ENCODE measurements at regions of chr2 and their contacts with region 1.

Region 1: GRCh38 chr2:222311978-222312738 is 13.4 kb upstream of the PAX3 start:
- DNase-seq: no peak
- H3K4me3 ChIP-seq: no peak overlapping the region
- H3K4me3 Mint-ChIP-seq: peak overlapping the region in 6 of 8 donors; percentile 24 to 51 (median 42)
- H3K27ac ChIP-seq: no peak overlapping the region
- H3K27ac Mint-ChIP-seq: peak overlapping the region in 6 of 7 donors; percentile 8 to 69 (median 56)
- H3K4me1 ChIP-seq: peaks cover 17% of the 10 kb centered on the region
- H3K4me1 Mint-ChIP-seq: peaks cover 4 to 10% (median 7%) of the 10 kb centered on the region in 4 donors
- H3K27me3 ChIP-seq: peaks cover 68% of the 10 kb centered on the region
- H3K27me3 Mint-ChIP-seq: peaks cover 67 to 75% of the 10 kb centered on the region in 2 donors

Region 2: GRCh38 chr2:222214885-222215284 is 97.3 kb before region 1 on chr2:
- CTCF ChIA-PET with region 1: no interaction called
- POLR2A ChIA-PET with region 1: no interaction called
- intact Hi-C with region 1: no loop called
- DNase-seq: no peak
- H3K4me3 ChIP-seq: no peak overlapping the region
- H3K4me3 Mint-ChIP-seq: no peak overlapping the region
- H3K27ac ChIP-seq: no peak overlapping the region
- H3K27ac Mint-ChIP-seq: no peak overlapping the region
- H3K4me1 ChIP-seq: no peaks in the 10 kb centered on the region
- H3K4me1 Mint-ChIP-seq: no peaks in the 10 kb centered on the region
- H3K27me3 ChIP-seq: no peaks in the 10 kb centered on the region
- H3K27me3 Mint-ChIP-seq: peaks cover 0 to 4% of the 10 kb centered on the region in 2 donors

Region 3: GRCh38 chr2:222257645-222258044 is 54.5 kb before region 1 on chr2:
- CTCF ChIA-PET with region 1: no interaction called
- POLR2A ChIA-PET with region 1: no interaction called
- intact Hi-C with region 1: no loop called
- DNase-seq: no peak
- H3K4me3 ChIP-seq: no peak overlapping the region
- H3K4me3 Mint-ChIP-seq: no peak overlapping the region
- H3K27ac ChIP-seq: no peak overlapping the region
- H3K27ac Mint-ChIP-seq: no peak overlapping the region
- H3K4me1 ChIP-seq: no peaks in the 10 kb centered on the region
- H3K4me1 Mint-ChIP-seq: no peaks in the 10 kb centered on the region
- H3K27me3 ChIP-seq: no peaks in the 10 kb centered on the region
- H3K27me3 Mint-ChIP-seq: peaks cover 8 to 12% of the 10 kb centered on the region in 2 donors

Region 4: GRCh38 chr2:222298311-222299150 is 13.6 kb before region 1 on chr2 and contains the start of gene PAX3:
- CTCF ChIA-PET with region 1: no interaction called
- POLR2A ChIA-PET with region 1: no interaction called
- intact Hi-C with region 1: loop called (anchors 1 kb)
- DNase-seq: no peak
- H3K4me3 ChIP-seq: no peak within 1 kb of the TSS
- H3K4me3 Mint-ChIP-seq: peak within 1 kb of the TSS in 7 of 8 donors; percentile 21 to 63 (median 49)
- H3K27ac ChIP-seq: no peak within 1 kb of the TSS
- H3K27ac Mint-ChIP-seq: peak within 1 kb of the TSS in 3 of 7 donors; percentile 24 to 64 (median 55)
- H3K4me1 ChIP-seq: peaks cover 29% of the 10 kb centered on the region
- H3K4me1 Mint-ChIP-seq: peaks cover 22 to 70% (median 43%) of the 10 kb centered on the region in 4 donors
- H3K27me3 ChIP-seq: peaks cover 81% of the 10 kb centered on the region
- H3K27me3 Mint-ChIP-seq: peaks cover 84% of the 10 kb centered on the region in 2 donors
- total RNA-seq, gene PAX3: not detected

Region 5: GRCh38 chr2:222410534-222410933 is 98.4 kb after region 1 on chr2:
- CTCF ChIA-PET with region 1: no interaction called
- POLR2A ChIA-PET with region 1: no interaction called
- intact Hi-C with region 1: no loop called
- DNase-seq: no peak
- H3K4me3 ChIP-seq: no peak overlapping the region
- H3K4me3 Mint-ChIP-seq: no peak overlapping the region
- H3K27ac ChIP-seq: no peak overlapping the region
- H3K27ac Mint-ChIP-seq: no peak overlapping the region
- H3K4me1 ChIP-seq: no peaks in the 10 kb centered on the region
- H3K4me1 Mint-ChIP-seq: no peaks in the 10 kb centered on the region
- H3K27me3 ChIP-seq: no peaks in the 10 kb centered on the region
- H3K27me3 Mint-ChIP-seq: no peaks in the 10 kb centered on the region

Measured in CD4-positive, alpha-beta memory T cell (primary cell).